Aorta (tissue), 5 donors: ENCODE measurements at regions of chr1 and their contacts with region 1.

Region 1: DNA sequence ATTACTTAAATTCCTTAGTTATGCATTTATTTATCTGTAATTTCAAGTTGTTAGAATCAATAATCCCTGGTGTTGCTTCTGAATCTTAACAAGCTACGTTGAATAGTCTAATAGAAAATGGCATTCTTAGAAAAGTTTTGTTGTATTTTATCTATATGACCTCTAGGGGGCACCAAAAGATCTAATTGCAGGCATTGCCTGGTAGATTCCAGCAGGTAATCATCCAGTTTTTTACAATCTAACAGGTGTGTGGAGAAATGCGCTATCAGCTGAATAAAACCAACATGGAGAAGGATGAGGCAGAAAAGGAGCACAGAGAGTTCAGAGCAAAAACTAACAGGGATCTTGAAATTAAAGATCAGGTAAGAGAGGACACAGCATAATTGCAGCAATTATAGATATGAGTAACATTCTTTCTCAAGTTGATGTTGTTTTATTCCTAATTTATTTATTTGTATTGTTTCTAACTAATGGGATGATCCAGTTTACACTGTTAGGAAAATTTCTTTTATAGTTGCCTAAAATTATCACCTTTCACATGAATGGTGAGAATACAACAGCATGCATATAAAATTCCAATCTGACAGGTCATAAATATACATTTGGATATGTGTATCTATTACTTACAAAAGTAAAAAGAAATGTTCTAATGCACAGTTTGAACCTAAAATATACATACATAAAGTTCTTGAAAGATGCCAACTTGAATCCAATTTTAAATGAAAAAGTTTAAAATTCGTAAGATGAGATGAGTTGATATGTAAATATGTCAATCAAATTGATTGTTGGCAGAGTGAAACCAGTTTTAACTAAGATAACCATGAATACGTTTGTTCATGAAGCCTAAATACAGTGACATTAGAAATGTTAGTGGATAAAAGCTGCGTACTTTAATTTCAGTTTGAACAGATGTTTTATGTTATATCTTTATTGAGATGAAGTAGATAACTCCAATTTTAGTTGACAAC is 88.4 kb downstream of the SDCCAG8 start:
- DNase-seq: no peak
- ATAC-seq: no peak
- H3K4me3 ChIP-seq: no peak overlapping the region
- H3K27ac ChIP-seq: no peak overlapping the region
- H3K4me1 ChIP-seq: no peaks in the 10 kb centered on the region
- H3K27me3 ChIP-seq: no peaks in the 10 kb centered on the region

Region 2: DNA sequence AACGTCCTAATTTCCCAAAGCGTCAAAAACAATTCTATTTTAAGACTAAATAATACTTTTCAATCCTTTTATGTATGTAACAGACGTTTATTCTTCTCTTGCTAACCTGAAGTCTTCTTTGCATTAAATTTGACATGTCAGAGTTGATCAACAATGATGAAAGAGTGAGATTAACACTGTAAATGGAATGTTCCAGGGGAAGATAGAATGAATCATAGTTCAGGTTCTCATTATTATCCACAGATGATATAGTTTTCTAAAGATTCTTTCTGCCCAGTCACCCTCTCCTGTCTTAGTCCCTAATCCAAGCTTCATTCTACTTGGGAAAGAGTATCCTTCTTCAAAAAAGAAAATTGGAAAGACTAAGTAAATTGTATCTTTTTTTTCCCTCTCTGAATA is 49.5 kb before region 1 on chr1:
- intact Hi-C with region 1: no loop called
- DNase-seq: no peak
- ATAC-seq: no peak
- H3K4me3 ChIP-seq: no peak overlapping the region
- H3K27ac ChIP-seq: no peak overlapping the region
- H3K4me1 ChIP-seq: no peaks in the 10 kb centered on the region
- H3K27me3 ChIP-seq: no peaks in the 10 kb centered on the region

Region 3: GRCh38 chr1:243582326-243582725 is 238.1 kb after region 1 on chr1:
- intact Hi-C with region 1: no loop called
- DNase-seq: no peak
- ATAC-seq: no peak
- H3K4me3 ChIP-seq: no peak overlapping the region
- H3K27ac ChIP-seq: no peak overlapping the region
- H3K4me1 ChIP-seq: no peaks in the 10 kb centered on the region
- H3K27me3 ChIP-seq: no peaks in the 10 kb centered on the region

Region 4: DNA sequence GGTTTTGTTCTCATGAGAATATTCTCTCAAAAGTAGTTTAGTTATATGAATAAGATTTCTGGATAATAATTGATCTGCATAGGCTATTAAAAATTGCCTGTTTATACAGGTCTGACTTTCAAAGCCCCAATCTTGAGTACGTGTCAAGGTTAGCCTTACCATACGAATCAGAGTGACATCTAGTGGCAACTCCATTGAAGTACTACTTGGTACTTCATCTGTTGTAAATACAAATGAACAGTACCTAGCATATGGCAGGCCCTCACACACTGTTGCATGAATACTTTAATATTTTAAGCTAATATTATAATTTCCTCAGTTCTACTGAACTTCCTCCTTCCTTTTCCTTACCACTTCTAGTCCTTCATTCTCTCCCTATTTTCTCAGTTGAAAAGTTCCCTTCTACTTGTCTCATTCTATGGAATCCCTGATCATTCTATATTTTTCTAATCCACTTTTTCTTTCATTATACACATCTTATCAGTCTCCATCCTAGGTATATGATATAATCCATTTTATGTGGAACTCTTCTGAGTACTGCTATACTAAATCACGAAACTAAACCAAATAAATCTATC is 404.5 kb after region 1 on chr1:
- intact Hi-C with region 1: loop called in 1 of 2 experiments (anchors 5 kb)
- DNase-seq: no peak
- ATAC-seq: peak; percentile 89
- H3K4me3 ChIP-seq: no peak overlapping the region
- H3K27ac ChIP-seq: no peak overlapping the region
- H3K4me1 ChIP-seq: no peaks in the 10 kb centered on the region
- H3K27me3 ChIP-seq: no peaks in the 10 kb centered on the region

Region 5: DNA sequence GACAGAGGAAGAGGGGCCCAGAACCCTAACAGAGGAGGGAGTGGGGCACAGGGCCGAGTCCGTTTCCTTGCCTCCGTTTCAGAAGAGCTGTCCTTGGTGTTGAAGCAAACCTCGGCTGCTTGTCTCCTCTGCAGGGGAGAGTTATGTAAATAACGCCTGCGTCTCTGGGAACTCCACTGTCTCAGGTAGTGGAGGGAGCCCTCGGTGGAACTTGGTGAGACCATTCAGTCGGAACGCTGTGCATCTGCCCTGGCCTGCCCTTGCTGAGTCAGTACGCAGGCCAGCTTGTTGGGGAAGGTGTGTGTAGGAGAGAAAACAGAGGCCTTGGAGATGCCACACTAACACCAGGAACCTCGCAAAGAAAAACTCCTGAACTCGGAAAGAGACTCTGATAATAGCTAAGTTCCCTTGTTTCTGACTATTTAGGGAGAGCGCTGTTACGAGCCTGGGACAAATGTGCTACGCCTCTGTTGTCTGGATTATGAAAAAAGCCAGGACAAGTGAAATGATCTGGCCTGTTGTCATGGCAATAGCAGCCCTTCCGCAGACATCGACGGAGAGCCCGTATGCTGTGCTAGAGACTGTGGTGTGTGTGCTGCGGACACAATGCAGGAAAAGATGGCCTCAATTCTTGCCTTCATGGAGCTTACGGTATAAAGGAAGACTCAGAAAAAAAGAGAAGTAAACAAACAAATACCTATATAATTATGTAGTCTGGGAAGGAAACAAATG is 600.3 kb after region 1 on chr1:
- intact Hi-C with region 1: no loop called
- DNase-seq: no peak
- ATAC-seq: no peak
- H3K4me3 ChIP-seq: no peak overlapping the region
- H3K27ac ChIP-seq: no peak overlapping the region
- H3K4me1 ChIP-seq: no peaks in the 10 kb centered on the region
- H3K27me3 ChIP-seq: no peaks in the 10 kb centered on the region